IMR-90 (cell line): ENCODE measurements at regions of chr5 and their contacts with region 1.

Region 1: GRCh38 chr5:1641560-1642166 is 117.9 kb upstream of the LPCAT1 start:
- DNase-seq: peak; percentile 84
- ATAC-seq: peak; percentile 85
- H3K4me3 ChIP-seq: no peak overlapping the region
- H3K27ac ChIP-seq: no peak overlapping the region
- H3K4me1 ChIP-seq: no peaks in the 10 kb centered on the region
- H3K27me3 ChIP-seq: peaks cover 53% of the 10 kb centered on the region
- CTCF ChIP-seq: peak; percentile 99
- POLR2A ChIP-seq: no peak
- RAD21 ChIP-seq: peak; percentile 88

Region 2: DNA sequence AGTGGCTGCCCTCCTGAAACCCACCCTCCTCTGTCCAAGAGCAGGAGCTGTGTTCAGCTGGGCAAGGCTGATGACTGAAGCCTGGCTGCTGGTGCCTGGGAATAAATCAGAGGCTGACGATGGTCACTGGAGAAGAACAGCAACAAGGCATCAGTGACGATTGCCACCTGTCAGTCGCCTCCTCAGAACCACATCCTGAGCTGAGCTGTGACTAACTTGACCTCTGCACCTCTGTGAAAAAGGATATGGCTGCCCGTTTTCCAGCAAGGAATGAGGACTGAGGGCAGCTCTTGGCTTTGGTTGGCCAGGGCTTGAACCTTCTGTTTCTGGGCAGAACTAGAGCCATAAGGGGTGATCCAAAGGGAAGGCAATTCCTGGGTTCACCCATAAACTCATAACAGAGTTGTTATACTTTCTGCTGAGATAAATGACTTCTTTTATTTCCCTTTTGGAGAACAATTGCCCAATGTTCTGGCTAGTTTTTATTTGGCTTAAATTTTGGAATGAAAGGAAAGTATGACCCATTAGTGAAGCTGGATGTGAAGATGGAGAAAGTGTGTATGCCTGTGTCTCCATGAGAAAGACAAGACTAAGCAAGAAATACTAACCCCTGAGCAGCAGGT is 708.9 kb before region 1 on chr5:
- CTCF ChIA-PET with region 1: interaction called, 5 read pairs
- POLR2A ChIA-PET with region 1: no interaction called
- dilution Hi-C with region 1: no loop called
- in situ Hi-C with region 1: loop called (anchors 10 kb)
- intact Hi-C with region 1: no loop called
- DNase-seq: peak; percentile 40
- ATAC-seq: peak; percentile 82
- H3K4me3 ChIP-seq: no peak overlapping the region
- H3K27ac ChIP-seq: peak overlapping the region; percentile 1; the same call in 1 of the 2 replicates
- H3K4me1 ChIP-seq: peaks cover 7% of the 10 kb centered on the region; the same call in 1 of the 2 replicates
- H3K27me3 ChIP-seq: peaks cover 42% of the 10 kb centered on the region
- CTCF ChIP-seq: no peak
- POLR2A ChIP-seq: no peak
- RAD21 ChIP-seq: no peak

Region 3: DNA sequence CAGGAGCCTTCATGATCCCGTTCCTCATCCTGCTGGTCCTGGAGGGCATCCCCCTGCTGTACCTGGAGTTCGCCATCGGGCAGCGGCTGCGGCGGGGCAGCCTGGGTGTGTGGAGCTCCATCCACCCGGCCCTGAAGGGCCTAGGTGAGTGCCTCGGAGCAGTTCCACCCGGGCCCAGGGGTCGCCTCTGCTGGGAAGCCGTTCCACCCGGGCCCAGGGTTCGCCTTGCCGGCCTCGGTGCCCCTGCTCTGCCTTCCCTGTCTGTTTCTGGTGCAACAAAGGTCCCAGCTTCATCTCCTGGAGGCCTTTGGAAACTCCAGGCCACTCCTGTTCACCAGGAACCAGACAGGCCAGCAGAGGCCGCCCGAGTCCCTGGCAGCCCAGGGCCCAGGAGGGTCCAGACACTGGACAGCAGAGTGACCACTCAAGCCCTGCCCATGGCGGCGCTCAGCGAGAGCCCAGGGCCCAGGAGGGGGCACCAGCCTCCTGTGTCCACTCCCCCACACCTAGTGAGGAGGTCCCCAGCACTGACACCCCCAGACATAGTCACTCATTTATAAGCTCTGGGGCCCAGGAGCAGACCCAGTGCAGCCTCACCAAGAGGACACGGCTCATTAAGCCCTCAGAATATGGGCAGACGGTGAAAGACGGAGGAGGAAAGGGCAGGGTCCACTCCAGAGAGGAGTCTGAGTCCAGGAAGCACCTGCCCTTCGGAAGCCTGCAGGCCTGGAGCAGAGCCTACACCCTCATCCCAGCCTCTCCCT is 432.7 kb before region 1 on chr5:
- CTCF ChIA-PET with region 1: no interaction called
- POLR2A ChIA-PET with region 1: no interaction called
- dilution Hi-C with region 1: no loop called
- in situ Hi-C with region 1: no loop called
- intact Hi-C with region 1: loop called (anchors 2 kb)
- DNase-seq: no peak
- ATAC-seq: peak; percentile 72
- H3K4me3 ChIP-seq: no peak overlapping the region
- H3K27ac ChIP-seq: no peak overlapping the region
- H3K4me1 ChIP-seq: peaks cover 3% of the 10 kb centered on the region; the same call in 1 of the 2 replicates
- H3K27me3 ChIP-seq: peaks cover 28% of the 10 kb centered on the region; the same call in 1 of the 2 replicates
- CTCF ChIP-seq: peak; percentile 38
- POLR2A ChIP-seq: no peak
- RAD21 ChIP-seq: peak; percentile 46

Region 4: DNA sequence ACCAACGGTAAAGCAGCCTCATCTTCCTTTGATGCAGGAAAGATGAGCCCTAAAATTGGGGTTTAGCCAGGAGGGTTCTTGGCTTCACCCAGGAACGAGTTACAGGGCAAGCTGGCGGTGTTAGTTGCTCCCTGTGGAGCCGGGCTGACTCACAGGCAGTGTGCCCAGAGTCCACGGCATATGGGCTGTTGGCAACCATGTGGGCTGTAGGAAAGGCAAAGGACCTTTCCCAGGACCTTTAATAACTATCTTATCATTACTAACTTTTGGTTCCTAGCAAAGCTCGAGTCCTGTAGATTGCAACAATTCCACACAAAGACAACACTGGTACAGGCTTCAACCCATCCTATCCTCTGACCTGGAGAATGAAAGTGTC is 267.0 kb before region 1 on chr5:
- CTCF ChIA-PET with region 1: interaction called, 3 read pairs
- POLR2A ChIA-PET with region 1: no interaction called
- dilution Hi-C with region 1: no loop called
- in situ Hi-C with region 1: loop called (anchors 25 kb)
- intact Hi-C with region 1: no loop called
- DNase-seq: no peak
- ATAC-seq: no peak
- H3K4me3 ChIP-seq: no peak overlapping the region
- H3K27ac ChIP-seq: no peak overlapping the region
- H3K4me1 ChIP-seq: no peaks in the 10 kb centered on the region
- H3K27me3 ChIP-seq: peaks cover 34% of the 10 kb centered on the region
- CTCF ChIP-seq: no peak
- POLR2A ChIP-seq: no peak
- RAD21 ChIP-seq: no peak

Region 5: DNA sequence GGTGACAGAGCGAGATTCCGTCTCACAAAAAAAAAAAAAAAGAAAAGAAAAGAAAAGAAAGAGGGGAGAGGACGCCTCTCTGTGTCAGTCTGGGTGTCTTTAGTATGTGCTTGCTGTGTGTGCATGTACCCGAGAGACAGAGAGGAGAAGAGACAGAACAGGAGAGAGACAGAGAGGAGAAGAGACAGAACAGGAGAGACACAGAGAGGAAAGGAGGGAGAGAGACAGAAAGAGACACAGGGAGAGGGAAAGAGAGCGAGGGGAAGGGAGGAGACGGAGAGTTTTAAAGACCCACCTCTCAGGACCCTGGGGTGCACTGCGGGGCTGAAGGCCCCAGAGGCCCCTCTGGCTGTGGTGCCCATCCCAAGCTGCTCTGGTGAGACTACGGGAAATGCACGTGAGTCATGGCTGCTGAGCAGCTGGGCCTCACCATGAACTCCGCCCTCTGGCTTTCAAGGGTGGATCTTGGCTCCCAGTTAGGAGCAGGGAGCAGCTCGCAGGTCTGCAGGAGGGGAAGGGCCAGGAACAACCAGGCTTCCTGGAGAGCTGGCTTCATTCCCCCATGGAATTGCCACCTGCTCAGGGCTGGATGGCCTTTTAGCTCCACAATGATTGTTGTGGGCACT is 204.3 kb before region 1 on chr5:
- CTCF ChIA-PET with region 1: no interaction called
- POLR2A ChIA-PET with region 1: no interaction called
- dilution Hi-C with region 1: no loop called
- in situ Hi-C with region 1: no loop called
- intact Hi-C with region 1: no loop called
- DNase-seq: peak; percentile 26
- ATAC-seq: peak; percentile 90
- H3K4me3 ChIP-seq: no peak overlapping the region
- H3K27ac ChIP-seq: no peak overlapping the region
- H3K4me1 ChIP-seq: no peaks in the 10 kb centered on the region; the same call in 1 of the 2 replicates
- H3K27me3 ChIP-seq: peaks cover 8% of the 10 kb centered on the region
- CTCF ChIP-seq: no peak
- POLR2A ChIP-seq: no peak
- RAD21 ChIP-seq: no peak

Region 6: DNA sequence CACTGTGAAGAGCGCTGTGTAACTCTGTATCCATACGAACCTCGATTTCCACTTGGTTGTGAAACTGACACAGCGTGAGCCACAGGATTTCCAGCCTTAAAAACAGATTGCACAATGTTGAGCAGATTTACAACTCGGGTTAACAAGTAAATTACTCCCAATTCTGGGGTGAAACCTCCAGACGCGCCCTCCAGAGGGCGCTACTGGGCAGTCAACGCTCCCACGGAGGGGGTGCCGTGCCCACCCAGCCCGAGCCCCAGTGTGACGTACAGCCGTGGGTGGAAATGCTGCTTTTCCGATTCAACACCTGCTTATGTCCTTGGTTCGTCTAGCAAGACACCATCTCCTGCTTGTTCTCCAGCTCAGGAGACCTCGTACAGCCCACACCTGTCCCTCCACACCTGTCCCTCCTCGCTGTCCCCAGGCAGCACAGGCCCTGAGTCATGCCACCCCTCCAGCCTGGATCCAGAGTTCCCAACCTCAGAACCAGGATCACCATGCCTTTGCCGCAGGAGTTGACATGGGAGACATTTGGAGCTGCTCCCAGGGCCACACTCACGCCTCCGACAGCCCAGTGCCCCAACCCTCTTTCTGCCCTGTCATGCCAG is 162.0 kb before region 1 on chr5:
- CTCF ChIA-PET with region 1: interaction called, 3 read pairs
- POLR2A ChIA-PET with region 1: no interaction called
- dilution Hi-C with region 1: no loop called
- in situ Hi-C with region 1: loop called (anchors 10 kb)
- intact Hi-C with region 1: loop called (anchors 2 kb)
- DNase-seq: peak; percentile 36
- ATAC-seq: peak; percentile 55; the same call in 1 of the 2 replicates
- H3K4me3 ChIP-seq: no peak overlapping the region
- H3K27ac ChIP-seq: no peak overlapping the region
- H3K4me1 ChIP-seq: no peaks in the 10 kb centered on the region
- H3K27me3 ChIP-seq: no peaks in the 10 kb centered on the region
- CTCF ChIP-seq: peak; percentile 64
- POLR2A ChIP-seq: no peak
- RAD21 ChIP-seq: peak; percentile 62